ENCODE measurements at regions of chr12 and their contacts with region 1.

Region 1: DNA sequence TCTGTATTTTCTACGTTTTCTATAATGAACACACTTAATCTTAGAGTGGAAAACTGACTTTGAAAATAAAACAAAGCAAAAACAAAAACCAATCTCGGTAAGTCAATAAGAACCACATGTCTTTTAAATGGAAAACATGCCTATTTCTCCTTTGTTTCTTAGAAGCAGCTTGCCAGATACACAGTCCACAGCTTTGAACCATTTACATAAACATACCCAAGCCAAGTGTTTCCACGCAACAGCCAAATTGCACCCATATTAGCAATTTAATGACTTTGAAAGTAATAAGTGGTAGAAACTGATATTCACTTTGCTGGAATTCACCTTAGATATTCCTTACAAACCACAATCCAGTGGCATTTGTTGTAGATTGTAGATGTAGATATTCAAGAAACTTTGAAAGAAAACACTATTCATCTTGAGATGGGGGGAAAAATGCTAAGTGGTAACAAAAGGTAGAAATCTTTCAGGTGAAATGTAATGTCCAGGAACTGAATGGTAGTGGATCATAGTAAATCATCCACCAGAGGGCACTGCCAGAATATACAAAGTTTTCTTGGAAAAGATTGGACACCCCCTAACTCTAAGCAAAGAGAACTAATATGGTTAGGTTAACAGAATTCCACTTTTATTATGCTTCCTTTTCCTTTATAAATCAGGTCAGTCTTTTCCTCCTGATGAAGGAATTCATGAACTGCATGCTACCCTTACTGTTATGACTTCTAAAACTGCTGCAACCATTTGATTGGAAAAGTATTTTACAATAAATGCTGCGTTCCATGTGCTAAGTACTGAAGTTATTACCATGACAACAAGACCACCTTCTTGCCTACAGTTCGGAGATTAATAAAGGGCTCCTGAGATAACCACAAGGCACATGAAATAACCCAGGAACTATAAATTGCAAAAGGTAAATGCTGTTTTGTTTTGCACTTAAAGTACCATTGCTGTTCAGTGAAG is 69.8 kb downstream of the RERG start:
- DNase-seq: peak; percentile 61
- H3K4me3 Mint-ChIP-seq: no peak overlapping the region
- H3K27ac Mint-ChIP-seq: no peak overlapping the region
- H3K4me1 Mint-ChIP-seq: peaks cover 40% of the 10 kb centered on the region
- H3K27me3 Mint-ChIP-seq: no peaks in the 10 kb centered on the region
- CTCF ChIP-seq: peak; percentile 41

Region 2: GRCh38 chr12:14995583-14996425 is 155.6 kb before region 1 on chr12:
- CTCF ChIA-PET with region 1: no interaction called
- POLR2A ChIA-PET with region 1: no interaction called
- intact Hi-C with region 1: loop called (anchors 5 kb)
- DNase-seq: peak; percentile 71
- H3K4me3 Mint-ChIP-seq: no peak overlapping the region
- H3K27ac Mint-ChIP-seq: peak overlapping the region; percentile 59
- H3K4me1 Mint-ChIP-seq: peaks cover 20% of the 10 kb centered on the region
- H3K27me3 Mint-ChIP-seq: no peaks in the 10 kb centered on the region
- CTCF ChIP-seq: peak; percentile 53

Region 3: DNA sequence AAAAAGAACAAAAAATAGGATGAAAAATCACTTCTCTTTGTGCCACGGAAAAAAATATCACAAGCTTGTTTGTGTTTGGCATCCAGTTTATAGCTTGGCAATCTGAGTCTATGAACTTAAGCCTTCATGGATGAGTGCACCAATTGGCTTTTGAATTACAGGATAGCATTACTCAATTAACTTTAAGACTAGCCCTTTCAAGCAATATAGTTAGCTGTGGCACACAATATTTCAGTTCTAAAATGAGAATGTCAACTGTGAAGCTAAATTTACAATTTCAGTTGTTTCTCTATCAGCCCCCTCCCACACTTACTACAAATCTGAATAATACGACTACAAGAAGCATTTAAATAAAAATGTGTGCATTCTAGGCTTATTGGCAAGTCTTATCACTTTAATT is 61.5 kb after region 1 on chr12:
- CTCF ChIA-PET with region 1: interaction called, 228 read pairs
- POLR2A ChIA-PET with region 1: interaction called, 34 read pairs
- intact Hi-C with region 1: no loop called
- DNase-seq: no peak
- H3K4me3 Mint-ChIP-seq: no peak overlapping the region
- H3K27ac Mint-ChIP-seq: no peak overlapping the region
- H3K4me1 Mint-ChIP-seq: peaks cover 45% of the 10 kb centered on the region
- H3K27me3 Mint-ChIP-seq: no peaks in the 10 kb centered on the region
- CTCF ChIP-seq: no peak

Region 4: DNA sequence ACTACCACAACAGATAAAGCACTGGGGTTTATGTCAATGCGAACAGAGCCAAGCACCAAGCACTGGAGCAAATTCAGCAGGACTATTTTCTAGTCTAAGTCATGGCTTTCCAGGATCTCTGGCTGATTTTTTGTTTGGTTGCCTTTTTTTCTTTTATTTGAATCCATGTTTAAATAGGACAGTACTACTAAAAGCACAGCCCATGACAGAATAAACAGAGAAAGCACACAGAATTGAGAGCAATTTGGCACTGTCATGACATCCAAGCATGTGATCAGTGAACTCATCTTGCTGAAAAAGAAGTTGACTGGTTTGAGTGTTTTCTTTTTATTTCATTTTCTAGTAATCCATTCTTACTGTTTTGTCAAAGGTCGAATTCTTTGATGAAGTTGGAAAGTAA is 92.9 kb after region 1 on chr12:
- CTCF ChIA-PET with region 1: no interaction called
- POLR2A ChIA-PET with region 1: no interaction called
- intact Hi-C with region 1: no loop called
- DNase-seq: no peak
- H3K4me3 Mint-ChIP-seq: no peak overlapping the region
- H3K27ac Mint-ChIP-seq: no peak overlapping the region
- H3K4me1 Mint-ChIP-seq: peaks cover 10% of the 10 kb centered on the region
- H3K27me3 Mint-ChIP-seq: no peaks in the 10 kb centered on the region
- CTCF ChIP-seq: no peak

Region 5: DNA sequence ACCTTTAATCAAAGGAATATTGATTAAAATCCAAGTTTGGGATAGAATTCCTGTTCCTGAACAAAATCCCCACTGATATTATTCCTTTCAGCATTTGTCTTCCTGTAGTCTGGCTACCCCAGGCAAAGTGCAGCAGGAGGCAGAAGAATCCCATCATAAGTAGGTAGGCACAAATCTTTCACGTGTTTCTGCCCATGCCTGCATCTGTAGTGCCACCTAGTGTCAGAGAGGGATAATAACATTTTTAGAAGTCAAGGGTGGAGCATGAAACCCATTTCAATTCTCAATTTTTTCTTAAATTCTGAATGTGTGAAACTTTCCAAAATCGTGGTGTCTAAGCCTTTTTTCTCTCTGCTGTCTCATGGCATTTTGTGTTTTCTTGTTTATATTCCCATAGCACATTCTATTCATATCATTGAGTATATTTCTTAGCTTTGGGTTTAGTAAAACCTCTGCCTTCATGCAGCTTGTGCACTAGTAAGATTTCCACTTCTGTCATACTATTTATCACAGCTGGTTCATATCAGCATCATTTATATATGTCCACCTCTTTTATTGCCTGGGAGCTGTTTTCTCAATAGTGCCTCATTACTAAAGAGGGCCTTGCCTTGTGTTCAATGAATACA is 117.6 kb after region 1 on chr12:
- CTCF ChIA-PET with region 1: interaction called, 17 read pairs
- POLR2A ChIA-PET with region 1: interaction called, 3 read pairs
- intact Hi-C with region 1: loop called (anchors 1 kb)
- DNase-seq: peak; percentile 85
- H3K4me3 Mint-ChIP-seq: no peak overlapping the region
- H3K27ac Mint-ChIP-seq: peak overlapping the region; percentile 70
- H3K4me1 Mint-ChIP-seq: peaks cover 19% of the 10 kb centered on the region
- H3K27me3 Mint-ChIP-seq: no peaks in the 10 kb centered on the region
- CTCF ChIP-seq: peak; percentile 83

Region 6: GRCh38 chr12:15522565-15523187 is 371.2 kb after region 1 on chr12:
- CTCF ChIA-PET with region 1: interaction called, 8 read pairs
- POLR2A ChIA-PET with region 1: no interaction called
- intact Hi-C with region 1: loop called (anchors 1 kb)
- DNase-seq: peak; percentile 68
- H3K4me3 Mint-ChIP-seq: no peak overlapping the region
- H3K27ac Mint-ChIP-seq: no peak overlapping the region
- H3K4me1 Mint-ChIP-seq: peaks cover 17% of the 10 kb centered on the region
- H3K27me3 Mint-ChIP-seq: no peaks in the 10 kb centered on the region
- CTCF ChIP-seq: peak; percentile 69

Measured in MCF 10A (cell line).